Naive thymus-derived CD4-positive, alpha-beta T cell (primary cell): ENCODE measurements at regions of chr21 and their contacts with region 1.

Region 1: DNA sequence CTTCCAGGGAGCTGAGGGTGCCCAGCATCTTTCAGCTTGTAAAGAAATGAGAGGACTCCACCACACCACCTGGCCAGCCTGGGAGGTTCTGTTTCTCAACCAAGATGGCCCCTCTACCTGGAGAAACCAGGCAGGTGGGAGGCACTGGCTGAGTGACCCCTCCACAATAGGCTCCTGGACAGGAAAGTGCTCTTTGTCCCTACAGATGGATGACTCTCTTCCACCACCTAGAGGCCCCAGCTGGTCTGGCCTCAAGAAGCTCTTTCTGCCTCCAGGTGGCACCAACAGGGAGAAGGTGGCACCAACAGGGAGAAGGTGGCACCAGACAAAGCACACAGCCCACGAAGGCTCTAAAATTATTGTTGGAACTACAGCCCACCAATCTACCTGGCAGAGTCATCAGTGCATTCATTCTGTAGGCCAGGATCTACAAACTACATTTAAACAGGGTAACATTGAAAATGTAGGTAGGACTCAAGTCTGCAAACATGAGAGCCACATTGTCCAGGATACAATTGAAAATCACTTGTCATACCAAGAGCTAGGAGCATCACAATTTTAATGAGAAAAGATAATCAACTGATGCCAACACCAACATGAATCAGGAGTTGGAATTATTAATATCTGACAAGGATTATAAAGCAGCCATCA is 14.4 kb downstream of the TMPRSS3 start:
- DNase-seq: peak in 4 of 9 donors; percentile 22 to 41 (median 29)
- ATAC-seq: peak; percentile 77
- H3K4me3 ChIP-seq: no peak overlapping the region
- H3K4me3 Mint-ChIP-seq: no peak overlapping the region
- H3K27ac ChIP-seq: no peak overlapping the region
- H3K27ac Mint-ChIP-seq: peak overlapping the region in 2 of 9 donors; percentile 29 to 71
- H3K4me1 ChIP-seq: peaks cover 0 to 14% of the 10 kb centered on the region in 2 donors
- H3K4me1 Mint-ChIP-seq: peaks cover 6 to 29% (median 25%) of the 10 kb centered on the region in 7 donors
- H3K27me3 ChIP-seq: no peaks in the 10 kb centered on the region
- H3K27me3 Mint-ChIP-seq: no peaks in the 10 kb centered on the region

Region 2: GRCh38 chr21:42309753-42310221 is 71.7 kb before region 1 on chr21:
- CTCF ChIA-PET with region 1: interaction called, 3 read pairs
- POLR2A ChIA-PET with region 1: no interaction called
- intact Hi-C with region 1: loop called in 1 of 2 experiments (anchors 2 kb)
- DNase-seq: peak; percentile 48 to 80 (median 61)
- ATAC-seq: peak; percentile 86
- H3K4me3 ChIP-seq: no peak overlapping the region
- H3K4me3 Mint-ChIP-seq: peak overlapping the region in 6 of 10 donors; percentile 7 to 46 (median 38)
- H3K27ac ChIP-seq: no peak overlapping the region
- H3K27ac Mint-ChIP-seq: peak overlapping the region in 6 of 9 donors; percentile 21 to 49 (median 36)
- H3K4me1 ChIP-seq: peaks cover 0 to 8% of the 10 kb centered on the region in 2 donors
- H3K4me1 Mint-ChIP-seq: peaks cover 0 to 16% (median 7%) of the 10 kb centered on the region in 7 donors
- H3K27me3 ChIP-seq: no peaks in the 10 kb centered on the region
- H3K27me3 Mint-ChIP-seq: peaks cover 0 to 15% (median 0%) of the 10 kb centered on the region in 5 donors

Region 3: DNA sequence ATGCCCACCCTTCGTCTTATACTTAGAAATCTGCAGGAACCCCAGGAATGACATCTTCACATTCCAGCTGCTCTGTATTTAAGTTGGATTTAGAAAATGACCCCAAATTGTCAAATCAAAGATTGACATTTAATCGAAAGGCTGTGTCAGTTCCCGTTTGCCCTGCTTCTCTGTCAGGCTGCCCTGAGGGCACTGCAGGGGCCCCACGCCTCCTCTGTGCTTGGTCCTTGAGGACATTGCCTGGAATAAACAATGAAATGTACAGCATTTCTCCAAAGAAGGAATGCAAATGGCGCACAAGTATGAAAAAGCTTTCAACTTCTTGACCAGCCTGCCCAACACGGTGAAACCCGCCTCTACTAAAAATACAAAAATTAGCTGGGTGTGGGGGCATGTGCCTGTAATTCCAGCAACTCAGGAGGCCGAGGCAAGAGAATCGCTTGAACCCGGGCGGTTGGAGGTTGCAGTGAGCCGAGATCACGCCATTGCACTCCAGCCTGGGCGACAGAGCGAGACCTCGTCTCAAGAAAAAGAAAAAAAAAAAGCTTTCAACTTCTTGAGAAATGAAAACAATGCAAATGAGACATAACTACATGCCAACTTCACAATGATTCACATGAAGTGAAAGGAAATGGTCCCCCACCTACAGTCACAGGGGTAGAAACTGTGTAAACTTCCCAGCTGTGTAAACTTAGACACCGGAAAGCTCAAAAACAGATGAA is 11.4 kb after region 1 on chr21:
- CTCF ChIA-PET with region 1: interaction called, 8 read pairs
- POLR2A ChIA-PET with region 1: interaction called, 10 read pairs
- intact Hi-C with region 1: no loop called
- DNase-seq: peak in 7 of 9 donors; percentile 29 to 64 (median 54)
- ATAC-seq: peak; percentile 82
- H3K4me3 ChIP-seq: peak overlapping the region; percentile 5
- H3K4me3 Mint-ChIP-seq: peak overlapping the region; percentile 22 to 75 (median 64)
- H3K27ac ChIP-seq: peak overlapping the region; percentile 46
- H3K27ac Mint-ChIP-seq: peak overlapping the region; percentile 5 to 91 (median 83)
- H3K4me1 ChIP-seq: peaks cover 13 to 34% of the 10 kb centered on the region in 2 donors
- H3K4me1 Mint-ChIP-seq: peaks cover 23 to 84% (median 63%) of the 10 kb centered on the region in 7 donors
- H3K27me3 ChIP-seq: no peaks in the 10 kb centered on the region
- H3K27me3 Mint-ChIP-seq: peaks cover 0 to 4% (median 0%) of the 10 kb centered on the region in 5 donors

Region 4: GRCh38 chr21:42414928-42415769 is 33.7 kb after region 1 on chr21:
- CTCF ChIA-PET with region 1: interaction called, 4 read pairs
- POLR2A ChIA-PET with region 1: no interaction called
- intact Hi-C with region 1: loop called in 1 of 2 experiments (anchors 5 kb)
- DNase-seq: peak; percentile 48 to 96 (median 80)
- ATAC-seq: peak; percentile 96
- H3K4me3 ChIP-seq: peak overlapping the region; percentile 49
- H3K4me3 Mint-ChIP-seq: peak overlapping the region; percentile 65 to 85 (median 75)
- H3K27ac ChIP-seq: peak overlapping the region; percentile 92
- H3K27ac Mint-ChIP-seq: peak overlapping the region in 8 of 9 donors; percentile 88 to 99 (median 97)
- H3K4me1 ChIP-seq: peaks cover 59 to 77% of the 10 kb centered on the region in 2 donors
- H3K4me1 Mint-ChIP-seq: peaks cover 23 to 75% (median 69%) of the 10 kb centered on the region in 7 donors
- H3K27me3 ChIP-seq: no peaks in the 10 kb centered on the region
- H3K27me3 Mint-ChIP-seq: no peaks in the 10 kb centered on the region

Region 5: GRCh38 chr21:42454786-42455580 is 73.5 kb after region 1 on chr21:
- CTCF ChIA-PET with region 1: interaction called, 15 read pairs
- POLR2A ChIA-PET with region 1: no interaction called
- intact Hi-C with region 1: loop called in 1 of 2 experiments (anchors 1 kb)
- DNase-seq: no peak
- ATAC-seq: no peak
- H3K4me3 ChIP-seq: no peak overlapping the region
- H3K4me3 Mint-ChIP-seq: peak overlapping the region in 1 of 10 donors; percentile 17
- H3K27ac ChIP-seq: no peak overlapping the region
- H3K27ac Mint-ChIP-seq: peak overlapping the region in 2 of 9 donors; percentile 32 to 45
- H3K4me1 ChIP-seq: peaks cover 0 to 17% of the 10 kb centered on the region in 2 donors
- H3K4me1 Mint-ChIP-seq: peaks cover 19 to 61% (median 48%) of the 10 kb centered on the region in 7 donors
- H3K27me3 ChIP-seq: no peaks in the 10 kb centered on the region
- H3K27me3 Mint-ChIP-seq: no peaks in the 10 kb centered on the region